CD4-positive, alpha-beta T cell (primary cell): ENCODE measurements at regions of chr7 and their contacts with region 1.

Region 1: GRCh38 chr7:117750612-117751563 is 122.4 kb downstream of the CTTNBP2 start:
- DNase-seq: no peak
- ATAC-seq: no peak
- H3K4me3 ChIP-seq: no peak overlapping the region
- H3K4me3 Mint-ChIP-seq: no peak overlapping the region
- H3K27ac ChIP-seq: no peak overlapping the region
- H3K27ac Mint-ChIP-seq: no peak overlapping the region
- H3K4me1 ChIP-seq: no peaks in the 10 kb centered on the region
- H3K4me1 Mint-ChIP-seq: no peaks in the 10 kb centered on the region
- H3K27me3 ChIP-seq: no peaks in the 10 kb centered on the region
- H3K27me3 Mint-ChIP-seq: no peaks in the 10 kb centered on the region
- CTCF ChIP-seq: no peak

Region 2: DNA sequence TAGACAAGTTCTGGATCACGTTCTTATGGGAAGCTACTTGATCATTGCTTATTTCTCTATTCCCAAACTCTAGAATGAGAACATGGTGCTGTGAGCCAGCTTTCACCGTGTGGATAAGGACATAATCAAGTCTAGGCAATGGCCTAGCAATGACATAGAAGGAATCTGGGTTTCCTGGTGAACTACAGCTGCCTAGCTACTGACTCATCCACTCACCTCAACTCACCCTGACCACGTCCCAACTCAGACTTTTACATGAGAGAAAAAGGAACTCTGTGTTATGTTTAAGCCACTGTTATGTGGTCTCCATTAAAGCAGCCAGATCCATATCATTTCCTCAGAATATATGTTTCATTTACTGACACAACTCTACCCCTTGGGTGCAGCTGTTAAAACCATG is 1097.7 kb before region 1 on chr7:
- CTCF ChIA-PET with region 1: no interaction called
- POLR2A ChIA-PET with region 1: no interaction called
- intact Hi-C with region 1: no loop called
- DNase-seq: no peak
- ATAC-seq: no peak
- H3K4me3 ChIP-seq: no peak overlapping the region
- H3K4me3 Mint-ChIP-seq: no peak overlapping the region
- H3K27ac ChIP-seq: no peak overlapping the region
- H3K27ac Mint-ChIP-seq: no peak overlapping the region
- H3K4me1 ChIP-seq: no peaks in the 10 kb centered on the region
- H3K4me1 Mint-ChIP-seq: no peaks in the 10 kb centered on the region
- H3K27me3 ChIP-seq: no peaks in the 10 kb centered on the region
- H3K27me3 Mint-ChIP-seq: peaks cover 11% of the 10 kb centered on the region
- CTCF ChIP-seq: no peak

Region 3: DNA sequence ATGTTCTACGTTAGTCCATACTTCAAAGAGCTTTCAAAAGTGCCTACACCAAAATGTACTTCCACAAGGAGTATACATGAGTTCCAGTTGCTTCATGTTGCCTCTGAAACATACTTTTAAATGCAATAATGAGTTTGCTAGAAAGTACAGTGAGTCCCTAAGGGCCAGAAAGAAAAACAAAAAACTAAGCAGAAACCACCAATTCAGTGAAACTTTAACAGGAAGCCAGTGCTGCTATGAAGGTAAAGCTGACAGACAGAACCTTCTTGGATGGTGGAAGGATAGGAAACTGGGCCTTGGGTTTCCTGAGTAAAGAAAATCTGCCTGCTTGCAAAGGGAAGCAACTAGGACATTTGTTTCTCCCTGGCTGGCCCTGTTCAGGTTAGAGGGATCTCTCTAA is 18.2 kb after region 1 on chr7:
- CTCF ChIA-PET with region 1: no interaction called
- POLR2A ChIA-PET with region 1: no interaction called
- intact Hi-C with region 1: no loop called
- DNase-seq: no peak
- ATAC-seq: no peak
- H3K4me3 ChIP-seq: no peak overlapping the region
- H3K4me3 Mint-ChIP-seq: no peak overlapping the region
- H3K27ac ChIP-seq: no peak overlapping the region
- H3K27ac Mint-ChIP-seq: no peak overlapping the region
- H3K4me1 ChIP-seq: no peaks in the 10 kb centered on the region
- H3K4me1 Mint-ChIP-seq: no peaks in the 10 kb centered on the region
- H3K27me3 ChIP-seq: no peaks in the 10 kb centered on the region
- H3K27me3 Mint-ChIP-seq: peaks cover 16% of the 10 kb centered on the region
- CTCF ChIP-seq: no peak

Region 4: DNA sequence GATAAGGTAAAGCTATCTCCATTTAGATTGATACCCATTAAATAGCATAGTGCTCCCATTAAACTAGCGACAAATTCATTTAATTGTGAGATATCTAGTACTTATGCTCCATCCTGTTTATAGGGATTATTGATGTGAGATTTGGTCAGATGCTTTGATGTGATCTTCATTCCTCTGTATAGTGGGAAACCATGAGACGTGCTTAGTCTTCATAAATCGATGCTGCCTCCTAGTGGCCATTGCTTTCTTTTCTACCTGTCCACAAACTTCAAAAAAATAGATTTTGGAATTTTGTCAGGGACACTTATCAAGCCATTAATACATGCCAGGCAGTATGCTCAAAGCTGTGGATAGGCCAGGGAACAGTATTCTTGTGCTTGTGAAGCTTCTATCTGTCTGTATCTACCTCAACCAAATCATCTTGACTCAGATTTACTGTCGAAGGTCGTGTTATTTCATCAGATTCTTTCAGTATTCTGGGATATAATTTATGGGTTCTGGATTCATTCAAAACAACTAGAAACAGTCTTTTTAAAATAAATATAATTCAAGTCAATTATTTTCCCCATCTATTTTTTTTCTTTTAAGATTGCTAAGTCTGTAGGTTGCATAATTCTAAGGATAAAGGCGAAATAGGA is 445.1 kb after region 1 on chr7:
- CTCF ChIA-PET with region 1: no interaction called
- POLR2A ChIA-PET with region 1: no interaction called
- intact Hi-C with region 1: loop called in 1 of 2 experiments (anchors 5 kb)
- DNase-seq: peak in 10 of 14 experiments; percentile 35 to 77 (median 42)
- ATAC-seq: peak; percentile 77
- H3K4me3 ChIP-seq: no peak overlapping the region
- H3K4me3 Mint-ChIP-seq: no peak overlapping the region
- H3K27ac ChIP-seq: no peak overlapping the region
- H3K27ac Mint-ChIP-seq: peak overlapping the region; percentile 2
- H3K4me1 ChIP-seq: no peaks in the 10 kb centered on the region
- H3K4me1 Mint-ChIP-seq: peaks cover 14% of the 10 kb centered on the region
- H3K27me3 ChIP-seq: no peaks in the 10 kb centered on the region
- H3K27me3 Mint-ChIP-seq: no peaks in the 10 kb centered on the region
- CTCF ChIP-seq: peak; percentile 93